A673 (cell line): ENCODE measurements at regions of chr12 and their contacts with region 1.

Region 1: DNA sequence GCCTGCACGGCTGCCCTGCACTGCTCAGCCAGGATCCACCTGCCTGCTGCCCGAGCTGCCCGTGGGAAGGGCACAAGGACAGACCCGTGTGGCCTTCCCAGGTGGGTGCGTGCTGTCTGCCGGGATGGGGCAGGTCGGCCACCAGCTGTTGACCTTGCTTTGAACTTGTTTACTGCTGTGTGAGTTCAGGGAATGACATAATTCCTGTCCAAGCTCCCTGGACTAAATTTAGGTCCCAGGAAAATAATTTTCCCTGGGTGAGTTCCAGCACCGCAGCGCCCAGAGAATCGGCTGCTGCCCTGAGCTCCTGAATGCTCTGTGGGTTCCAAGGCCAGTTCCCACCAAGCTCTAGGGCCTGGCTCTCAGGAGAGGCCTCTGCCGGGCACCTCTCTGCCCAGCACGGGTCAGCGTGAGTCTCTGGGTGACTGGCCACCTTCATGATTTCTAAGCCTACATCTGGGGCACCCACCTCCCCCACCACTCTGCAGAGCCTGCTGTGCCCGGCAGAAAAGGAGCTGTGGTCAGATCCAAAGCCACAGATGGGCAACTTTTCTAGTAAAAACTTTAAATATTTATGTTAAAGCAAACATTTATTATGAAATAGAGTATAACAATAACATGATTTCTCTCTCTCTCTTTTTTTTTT is 27.2 kb upstream of the MLXIP start:
- DNase-seq: no peak
- H3K4me3 ChIP-seq: no peak overlapping the region
- H3K27ac ChIP-seq: no peak overlapping the region
- H3K4me1 ChIP-seq: no peaks in the 10 kb centered on the region
- H3K27me3 ChIP-seq: no peaks in the 10 kb centered on the region
- CTCF ChIP-seq: no peak

Region 2: DNA sequence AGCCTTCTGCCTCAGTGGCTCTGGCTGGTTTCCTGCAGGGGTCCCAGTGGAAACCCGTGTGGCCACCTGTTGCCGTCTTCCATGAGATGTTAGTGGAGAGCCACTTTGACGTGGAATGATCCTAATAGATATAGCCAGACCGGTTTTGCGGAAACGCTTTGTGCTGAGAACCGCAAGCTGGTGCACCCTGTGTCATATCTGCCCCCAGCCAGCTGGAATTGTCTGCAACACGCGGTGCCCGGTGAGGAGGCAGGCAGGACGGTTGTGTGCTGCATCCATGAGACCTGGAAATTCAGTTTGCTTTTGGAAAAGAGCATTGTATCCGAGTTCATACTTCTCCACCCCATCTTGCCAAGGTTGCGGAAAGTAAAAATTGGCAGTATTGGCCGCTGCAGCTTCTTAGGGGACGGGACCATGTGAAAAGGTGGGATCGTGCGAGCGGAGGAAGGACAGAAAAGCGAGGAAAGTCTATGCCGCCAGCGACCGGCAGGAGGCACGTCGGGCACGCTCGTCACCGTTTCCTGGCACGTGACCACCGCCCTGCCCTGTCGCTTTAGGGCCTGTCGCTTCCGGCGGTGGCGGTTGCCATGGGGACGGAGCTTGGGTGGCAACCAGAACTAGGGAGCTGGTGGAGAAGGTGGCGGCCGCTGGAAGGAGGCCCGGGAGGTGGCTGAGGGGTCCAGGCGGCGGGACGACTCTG is 133.2 kb before region 1 on chr12 and contains the start of gene CFAP251:
- CTCF ChIA-PET with region 1: interaction called, 14 read pairs
- POLR2A ChIA-PET with region 1: no interaction called
- intact Hi-C with region 1: loop called (anchors 10 kb)
- DNase-seq: peak; percentile 98
- H3K4me3 ChIP-seq: peak within 1 kb of the TSS; percentile 56
- H3K27ac ChIP-seq: peak within 1 kb of the TSS; percentile 81
- H3K4me1 ChIP-seq: peaks cover 37% of the 10 kb centered on the region
- H3K27me3 ChIP-seq: no peaks in the 10 kb centered on the region
- CTCF ChIP-seq: peak; percentile 72
- total RNA-seq, gene CFAP251: 5.5 and 7.5 TPM in 2 replicates

Region 3: GRCh38 chr12:122078141-122079032 is 27.0 kb after region 1 on chr12 and contains the start of gene MLXIP:
- CTCF ChIA-PET with region 1: interaction called, 3 read pairs
- POLR2A ChIA-PET with region 1: interaction called, 15 read pairs
- intact Hi-C with region 1: no loop called
- DNase-seq: peak; percentile 95
- H3K4me3 ChIP-seq: peak within 1 kb of the TSS; percentile 68
- H3K27ac ChIP-seq: peak within 1 kb of the TSS; percentile 66
- H3K4me1 ChIP-seq: peaks cover 30% of the 10 kb centered on the region
- H3K27me3 ChIP-seq: no peaks in the 10 kb centered on the region
- CTCF ChIP-seq: no peak
- total RNA-seq, gene MLXIP: 32.7 and 35.8 TPM in 2 replicates

Region 4: DNA sequence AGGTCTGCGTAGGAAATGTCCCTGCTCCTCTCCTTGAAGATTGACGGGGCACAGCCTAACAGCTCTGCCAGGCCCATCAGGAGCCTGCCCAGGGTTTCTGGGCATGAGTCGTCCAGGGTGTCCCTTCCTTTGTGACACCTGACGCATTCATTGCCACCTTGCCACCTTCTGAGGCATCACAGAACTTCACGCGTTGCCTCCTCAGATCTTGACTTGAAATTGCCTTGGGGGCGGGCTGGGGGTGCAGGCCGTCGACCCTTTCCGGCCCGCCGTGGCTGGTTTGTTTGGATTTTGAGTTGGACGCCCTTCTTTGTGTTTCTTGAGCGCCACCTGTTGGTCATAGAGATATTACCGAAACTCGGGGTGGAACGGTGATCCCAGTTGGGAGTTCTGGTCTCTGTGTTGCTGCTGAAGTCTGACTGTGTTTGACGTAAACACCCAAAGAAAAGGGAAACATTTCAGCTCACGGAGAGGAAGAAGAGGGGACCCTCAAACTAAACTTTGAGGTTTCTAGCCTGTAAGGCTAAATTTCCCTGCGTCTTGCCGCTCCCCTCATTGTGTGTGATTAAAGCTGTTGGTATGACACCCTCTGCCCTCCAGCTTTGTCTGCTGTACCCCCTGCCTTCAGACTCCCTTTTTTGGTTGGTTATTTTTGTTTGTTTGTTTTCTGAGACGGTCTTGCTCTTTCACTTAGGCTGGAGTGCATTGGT is 71.9 kb after region 1 on chr12:
- CTCF ChIA-PET with region 1: interaction called, 18 read pairs
- POLR2A ChIA-PET with region 1: no interaction called
- intact Hi-C with region 1: loop called (anchors 1 kb)
- DNase-seq: peak; percentile 82
- H3K4me3 ChIP-seq: no peak overlapping the region
- H3K27ac ChIP-seq: no peak overlapping the region
- H3K4me1 ChIP-seq: peaks cover 15% of the 10 kb centered on the region
- H3K27me3 ChIP-seq: no peaks in the 10 kb centered on the region
- CTCF ChIP-seq: peak; percentile 84

Region 5: GRCh38 chr12:122190842-122191668 is 139.7 kb after region 1 on chr12:
- CTCF ChIA-PET with region 1: interaction called, 9 read pairs
- POLR2A ChIA-PET with region 1: no interaction called
- intact Hi-C with region 1: loop called (anchors 5 kb)
- DNase-seq: peak; percentile 73
- H3K4me3 ChIP-seq: no peak overlapping the region
- H3K27ac ChIP-seq: no peak overlapping the region
- H3K4me1 ChIP-seq: no peaks in the 10 kb centered on the region
- H3K27me3 ChIP-seq: no peaks in the 10 kb centered on the region
- CTCF ChIP-seq: peak; percentile 82

Region 6: DNA sequence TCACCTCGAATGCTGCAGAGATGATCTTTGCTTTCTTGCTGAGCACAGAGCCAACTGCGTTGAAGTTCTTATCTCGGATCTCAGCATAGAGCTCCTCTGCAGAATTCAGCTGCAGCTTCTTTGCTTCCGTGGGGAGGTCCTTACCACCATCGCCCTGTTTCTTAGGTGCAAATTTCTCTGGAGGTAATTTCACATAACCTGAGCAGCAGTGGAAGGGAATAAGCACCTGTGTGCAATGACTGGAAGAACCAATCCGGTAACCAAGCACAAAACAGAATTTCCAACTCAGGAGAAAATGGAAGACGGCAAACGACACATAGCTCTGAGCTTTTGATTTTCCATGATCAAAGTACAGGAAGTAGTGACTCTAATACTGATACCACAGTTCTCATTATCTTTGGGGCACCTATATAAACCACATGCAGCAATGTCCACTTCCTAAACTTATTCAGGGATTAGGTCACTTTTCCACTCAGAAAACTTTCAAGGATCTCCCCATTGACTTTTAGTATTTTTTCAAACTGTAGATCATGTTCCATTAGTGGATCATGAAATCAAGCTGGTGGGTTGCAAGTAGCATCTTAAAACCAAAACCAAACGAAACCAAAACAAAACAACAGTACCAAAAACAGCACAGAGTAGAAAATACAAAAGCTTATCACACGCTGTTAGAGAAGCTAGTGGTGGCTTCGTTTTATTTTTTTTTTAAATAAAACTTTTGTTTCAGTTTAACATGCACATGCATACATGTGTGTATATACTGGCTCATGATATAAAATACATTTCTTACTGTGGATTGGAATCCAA is 193.4 kb after region 1 on chr12:
- CTCF ChIA-PET with region 1: no interaction called
- POLR2A ChIA-PET with region 1: no interaction called
- intact Hi-C with region 1: no loop called
- DNase-seq: no peak
- H3K4me3 ChIP-seq: no peak overlapping the region
- H3K27ac ChIP-seq: no peak overlapping the region
- H3K4me1 ChIP-seq: no peaks in the 10 kb centered on the region
- H3K27me3 ChIP-seq: no peaks in the 10 kb centered on the region
- CTCF ChIP-seq: no peak